AG04449 (cell line): ENCODE measurements at regions of chr18 and their contacts with region 1.

Region 1: DNA sequence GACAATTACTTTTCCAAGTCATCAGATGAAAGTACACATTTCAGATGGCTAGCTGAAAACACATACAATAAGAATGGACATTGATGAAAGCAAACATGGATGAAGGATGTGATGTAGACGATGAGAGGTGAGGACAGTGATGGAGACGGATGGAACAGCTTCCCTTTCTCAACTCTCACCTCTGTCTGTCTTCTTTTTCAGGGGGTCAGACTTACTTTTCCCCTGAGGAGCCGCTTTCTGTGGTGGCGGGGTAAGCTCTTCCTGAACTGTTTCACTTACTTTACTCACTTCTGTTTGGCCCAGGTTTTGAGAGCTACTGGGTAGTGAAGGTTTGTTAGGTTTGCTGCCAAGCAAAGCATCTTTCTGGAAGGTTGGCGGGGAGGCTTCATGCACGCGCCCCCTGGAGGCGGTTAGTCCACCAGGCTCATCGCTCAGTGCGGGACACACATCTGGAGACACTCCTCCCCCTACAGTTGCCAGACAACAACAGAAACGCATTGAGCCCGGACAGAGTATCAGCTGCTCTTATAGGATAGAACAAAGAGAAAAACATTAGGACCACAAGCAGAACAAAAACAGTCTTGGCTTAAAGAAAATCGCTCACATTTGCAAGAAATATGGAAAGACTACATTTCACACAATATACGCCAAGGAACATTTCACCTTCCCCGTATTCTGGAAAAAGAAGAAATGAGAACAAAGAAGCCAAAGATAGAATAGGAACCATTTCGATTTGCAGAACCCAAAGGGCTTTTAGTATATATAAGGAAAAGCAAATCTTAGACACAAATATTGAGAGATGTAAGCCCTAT is 90.5 kb downstream of the MYOM1 start:
- DNase-seq: peak; percentile 10
- H3K4me3 ChIP-seq: no peak overlapping the region
- CTCF ChIP-seq: peak; percentile 97

Region 2: GRCh38 chr18:2923464-2923863 is 205.8 kb before region 1 on chr18:
- CTCF ChIA-PET with region 1: interaction called, 17 read pairs
- POLR2A ChIA-PET with region 1: no interaction called
- DNase-seq: no peak
- H3K4me3 ChIP-seq: no peak overlapping the region
- CTCF ChIP-seq: no peak

Region 3: GRCh38 chr18:2948038-2948437 is 181.2 kb before region 1 on chr18:
- CTCF ChIA-PET with region 1: interaction called, 36 read pairs
- POLR2A ChIA-PET with region 1: no interaction called
- DNase-seq: peak; percentile 16
- H3K4me3 ChIP-seq: no peak overlapping the region
- CTCF ChIP-seq: peak; percentile 16

Region 4: DNA sequence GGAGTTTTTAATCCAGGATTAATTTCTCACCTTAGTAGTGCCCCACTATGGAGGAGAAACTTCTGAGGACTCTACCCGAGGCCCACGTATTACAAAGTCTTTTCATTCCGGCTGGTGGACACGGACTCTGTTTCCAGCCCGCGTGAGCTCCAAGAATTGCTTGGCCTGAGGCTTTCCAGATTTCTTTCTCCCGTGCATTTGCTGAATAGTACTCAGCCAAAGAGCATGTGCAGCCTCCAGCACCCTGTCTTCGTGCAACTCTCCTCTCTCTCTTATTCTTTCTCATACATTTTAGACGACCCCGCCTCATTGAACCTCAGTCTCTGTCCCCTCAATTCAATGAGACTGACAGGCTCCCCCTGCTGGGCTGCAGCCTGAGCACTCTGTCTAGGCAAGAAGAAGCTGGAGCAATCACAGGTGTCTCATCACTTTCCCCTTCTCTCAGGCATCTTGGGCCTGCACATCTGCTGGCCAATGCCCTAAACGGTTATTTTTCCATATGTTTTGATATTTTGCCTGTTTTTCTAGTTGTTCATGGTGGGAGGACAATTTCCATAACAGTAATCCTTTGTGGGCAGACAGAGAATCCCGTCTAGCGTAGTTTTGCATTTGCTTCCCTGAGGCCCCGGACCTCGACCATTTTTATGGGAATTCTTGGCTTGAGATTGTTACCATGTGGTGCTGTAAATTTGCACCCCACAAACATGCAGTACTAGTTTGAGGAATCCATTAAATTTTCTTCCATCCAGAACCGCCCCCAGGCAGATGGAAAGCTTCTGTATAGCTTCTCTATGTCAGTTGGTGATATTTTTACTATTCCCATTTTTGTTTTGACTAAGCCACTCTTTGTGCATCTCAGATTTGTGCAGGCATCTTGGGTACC is 66.2 kb before region 1 on chr18:
- CTCF ChIA-PET with region 1: interaction called, 12 read pairs
- POLR2A ChIA-PET with region 1: no interaction called
- DNase-seq: no peak
- H3K4me3 ChIP-seq: no peak overlapping the region
- CTCF ChIP-seq: peak; percentile 67

Region 5: GRCh38 chr18:3088449-3088848 is 40.8 kb before region 1 on chr18:
- CTCF ChIA-PET with region 1: interaction called, 26 read pairs
- POLR2A ChIA-PET with region 1: no interaction called
- DNase-seq: no peak
- H3K4me3 ChIP-seq: no peak overlapping the region
- CTCF ChIP-seq: no peak

Region 6: GRCh38 chr18:3140986-3141639 is 11.9 kb after region 1 on chr18:
- CTCF ChIA-PET with region 1: interaction called, 42 read pairs
- POLR2A ChIA-PET with region 1: no interaction called
- DNase-seq: no peak
- H3K4me3 ChIP-seq: no peak overlapping the region
- CTCF ChIP-seq: no peak

Region 7: GRCh38 chr18:3245853-3246634 is 116.8 kb after region 1 on chr18:
- CTCF ChIA-PET with region 1: interaction called, 18 read pairs
- POLR2A ChIA-PET with region 1: no interaction called
- DNase-seq: no peak
- H3K4me3 ChIP-seq: peak overlapping the region; percentile 44
- CTCF ChIP-seq: peak; percentile 89